ENCODE measurements at regions of chr4 and their contacts with region 1.

Region 1: GRCh38 chr4:85370430-85371032 is 104.4 kb upstream of the ARHGAP24 start:
- DNase-seq: peak; percentile 5
- H3K4me3 ChIP-seq: no peak overlapping the region
- H3K27ac ChIP-seq: no peak overlapping the region
- H3K4me1 ChIP-seq: no peaks in the 10 kb centered on the region
- H3K27me3 ChIP-seq: no peaks in the 10 kb centered on the region
- CTCF ChIP-seq: peak; percentile 78
- EP300 ChIP-seq: no peak
- RAD21 ChIP-seq: peak; percentile 71

Region 2: GRCh38 chr4:85147439-85148076 is 223.0 kb before region 1 on chr4:
- CTCF ChIA-PET with region 1: interaction called, 21 read pairs
- POLR2A ChIA-PET with region 1: no interaction called
- DNase-seq: peak; percentile 52
- H3K4me3 ChIP-seq: no peak overlapping the region
- H3K27ac ChIP-seq: no peak overlapping the region
- H3K4me1 ChIP-seq: no peaks in the 10 kb centered on the region; a peak in 1 of 4 replicates
- H3K27me3 ChIP-seq: no peaks in the 10 kb centered on the region
- CTCF ChIP-seq: peak; percentile 76
- EP300 ChIP-seq: no peak
- RAD21 ChIP-seq: peak; percentile 82

Region 3: GRCh38 chr4:85381968-85382367 is 11.4 kb after region 1 on chr4:
- CTCF ChIA-PET with region 1: interaction called, 40 read pairs
- POLR2A ChIA-PET with region 1: no interaction called
- DNase-seq: no peak
- H3K4me3 ChIP-seq: no peak overlapping the region
- H3K27ac ChIP-seq: no peak overlapping the region
- H3K4me1 ChIP-seq: no peaks in the 10 kb centered on the region
- H3K27me3 ChIP-seq: no peaks in the 10 kb centered on the region
- CTCF ChIP-seq: no peak
- EP300 ChIP-seq: no peak
- RAD21 ChIP-seq: no peak

Region 4: GRCh38 chr4:85474818-85475630 is 104.5 kb after region 1 on chr4 and contains the start of gene ARHGAP24:
- CTCF ChIA-PET with region 1: no interaction called
- POLR2A ChIA-PET with region 1: no interaction called
- DNase-seq: peak; percentile 68
- H3K4me3 ChIP-seq: peak within 1 kb of the TSS in 1 of 2 experiments; percentile 32; a peak in 2 of 4 replicates
- H3K27ac ChIP-seq: no peak within 1 kb of the TSS
- H3K4me1 ChIP-seq: no peaks in the 10 kb centered on the region; a peak in 2 of 4 replicates
- H3K27me3 ChIP-seq: no peaks in the 10 kb centered on the region
- CTCF ChIP-seq: no peak
- EP300 ChIP-seq: no peak
- RAD21 ChIP-seq: no peak
- polyA plus RNA-seq, gene ARHGAP24: 1.4 and 1.6 TPM in 2 replicates